ENCODE measurements at regions of chr20 and their contacts with region 1.

Region 1: DNA sequence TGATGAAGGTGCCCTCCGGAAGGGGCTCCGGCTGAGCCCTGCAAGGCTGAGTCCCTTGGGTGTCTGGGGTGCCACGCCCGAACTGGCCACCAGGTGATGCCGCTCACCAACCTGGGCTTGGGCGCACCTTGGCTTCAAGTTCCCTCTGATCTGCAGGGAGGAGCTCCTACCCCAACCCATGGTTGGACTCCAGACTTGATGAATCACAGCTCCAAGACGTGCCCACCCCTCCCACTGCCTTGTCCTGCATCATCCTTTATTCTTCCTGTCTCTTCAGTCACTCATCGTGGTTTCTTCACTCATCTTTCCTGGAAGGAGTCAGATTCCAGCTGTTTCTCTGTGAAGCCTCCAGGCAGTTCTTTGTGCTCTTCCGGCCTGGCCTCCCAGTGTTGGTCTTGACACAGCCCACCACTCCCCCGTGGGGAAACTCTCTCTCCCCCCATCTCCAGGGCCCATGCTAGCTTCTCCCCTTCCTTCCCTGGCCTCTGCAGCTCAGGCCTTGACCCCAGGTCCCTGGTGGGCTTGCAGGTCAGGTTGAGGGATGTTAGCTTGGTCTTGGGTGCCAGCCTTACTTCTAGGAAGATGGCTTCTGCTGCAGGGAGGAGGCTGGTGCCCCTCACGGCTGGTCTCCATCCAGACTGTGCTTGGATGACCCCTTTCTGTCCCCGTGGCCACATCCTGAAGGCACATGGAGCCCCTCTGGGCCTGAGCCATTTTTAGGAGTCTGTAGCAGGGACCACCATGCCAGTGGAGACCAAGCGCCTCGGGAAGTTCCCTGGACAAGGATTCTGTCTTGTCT is 2.6 kb upstream of the ZBP1 start:
- DNase-seq: peak; percentile 75
- H3K4me3 Mint-ChIP-seq: no peak overlapping the region
- H3K27ac Mint-ChIP-seq: no peak overlapping the region
- H3K4me1 Mint-ChIP-seq: peaks cover 6% of the 10 kb centered on the region
- H3K27me3 Mint-ChIP-seq: no peaks in the 10 kb centered on the region
- CTCF ChIP-seq: peak; percentile 84

Region 2: DNA sequence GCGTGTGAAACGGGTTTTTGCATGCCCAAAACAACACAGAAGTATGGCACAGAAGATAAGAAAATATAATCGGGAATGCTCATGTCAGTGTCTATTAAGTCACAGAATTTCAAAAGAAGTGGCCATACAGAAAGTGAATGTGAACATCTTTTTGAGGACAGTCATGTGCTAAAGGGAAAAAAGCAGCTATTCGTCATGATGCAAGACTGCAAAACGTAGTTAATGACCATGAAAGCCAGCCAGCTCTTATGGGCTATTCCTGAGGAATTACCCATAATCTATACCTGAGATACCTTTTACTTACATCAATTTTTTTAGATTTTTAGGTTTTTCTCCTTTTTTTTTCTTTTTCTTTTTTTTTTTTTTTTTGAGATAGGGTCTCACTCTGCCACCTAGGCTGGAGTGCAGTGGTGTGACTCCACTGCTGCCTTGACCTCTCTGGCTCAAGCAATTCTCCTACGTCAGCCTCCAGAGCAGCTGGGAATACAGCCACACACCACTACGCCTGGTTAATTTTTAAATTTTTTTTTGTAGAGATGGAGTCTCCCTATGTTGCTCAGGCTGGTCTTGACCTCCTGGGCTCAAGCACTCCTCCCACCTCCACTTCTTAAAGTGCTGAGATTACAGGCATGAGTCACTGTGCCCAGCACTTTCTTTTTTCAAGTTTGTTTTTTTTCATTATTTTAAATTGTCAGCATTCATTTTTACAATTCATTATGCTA is 15.6 kb after region 1 on chr20:
- CTCF ChIA-PET with region 1: interaction called, 14 read pairs
- POLR2A ChIA-PET with region 1: no interaction called
- intact Hi-C with region 1: no loop called
- DNase-seq: no peak
- H3K4me3 Mint-ChIP-seq: no peak overlapping the region
- H3K27ac Mint-ChIP-seq: no peak overlapping the region
- H3K4me1 Mint-ChIP-seq: no peaks in the 10 kb centered on the region
- H3K27me3 Mint-ChIP-seq: peaks cover 90% of the 10 kb centered on the region
- CTCF ChIP-seq: no peak

Region 3: GRCh38 chr20:57709931-57710799 is 87.4 kb after region 1 on chr20 and contains the start of gene PMEPA1:
- CTCF ChIA-PET with region 1: interaction called, 6 read pairs
- POLR2A ChIA-PET with region 1: no interaction called
- intact Hi-C with region 1: loop called (anchors 1 kb)
- DNase-seq: peak; percentile 93
- H3K4me3 Mint-ChIP-seq: peak within 1 kb of the TSS; percentile 100
- H3K27ac Mint-ChIP-seq: peak within 1 kb of the TSS; percentile 96
- H3K4me1 Mint-ChIP-seq: peaks cover 47% of the 10 kb centered on the region
- H3K27me3 Mint-ChIP-seq: no peaks in the 10 kb centered on the region
- CTCF ChIP-seq: no peak
- total RNA-seq, gene PMEPA1: 60.6 and 68.5 TPM in 2 replicates

Region 4: GRCh38 chr20:58179432-58180099 is 556.8 kb after region 1 on chr20:
- CTCF ChIA-PET with region 1: interaction called, 44 read pairs
- POLR2A ChIA-PET with region 1: no interaction called
- intact Hi-C with region 1: loop called (anchors 2 kb)
- DNase-seq: peak; percentile 40
- H3K4me3 Mint-ChIP-seq: no peak overlapping the region
- H3K27ac Mint-ChIP-seq: no peak overlapping the region
- H3K4me1 Mint-ChIP-seq: no peaks in the 10 kb centered on the region
- H3K27me3 Mint-ChIP-seq: peaks cover 32% of the 10 kb centered on the region
- CTCF ChIP-seq: peak; percentile 99

Region 5: GRCh38 chr20:58202044-58202443 is 579.3 kb after region 1 on chr20:
- CTCF ChIA-PET with region 1: interaction called, 83 read pairs
- POLR2A ChIA-PET with region 1: no interaction called
- intact Hi-C with region 1: no loop called
- DNase-seq: no peak
- H3K4me3 Mint-ChIP-seq: no peak overlapping the region
- H3K27ac Mint-ChIP-seq: no peak overlapping the region
- H3K4me1 Mint-ChIP-seq: no peaks in the 10 kb centered on the region
- H3K27me3 Mint-ChIP-seq: peaks cover 56% of the 10 kb centered on the region
- CTCF ChIP-seq: no peak

Region 6: DNA sequence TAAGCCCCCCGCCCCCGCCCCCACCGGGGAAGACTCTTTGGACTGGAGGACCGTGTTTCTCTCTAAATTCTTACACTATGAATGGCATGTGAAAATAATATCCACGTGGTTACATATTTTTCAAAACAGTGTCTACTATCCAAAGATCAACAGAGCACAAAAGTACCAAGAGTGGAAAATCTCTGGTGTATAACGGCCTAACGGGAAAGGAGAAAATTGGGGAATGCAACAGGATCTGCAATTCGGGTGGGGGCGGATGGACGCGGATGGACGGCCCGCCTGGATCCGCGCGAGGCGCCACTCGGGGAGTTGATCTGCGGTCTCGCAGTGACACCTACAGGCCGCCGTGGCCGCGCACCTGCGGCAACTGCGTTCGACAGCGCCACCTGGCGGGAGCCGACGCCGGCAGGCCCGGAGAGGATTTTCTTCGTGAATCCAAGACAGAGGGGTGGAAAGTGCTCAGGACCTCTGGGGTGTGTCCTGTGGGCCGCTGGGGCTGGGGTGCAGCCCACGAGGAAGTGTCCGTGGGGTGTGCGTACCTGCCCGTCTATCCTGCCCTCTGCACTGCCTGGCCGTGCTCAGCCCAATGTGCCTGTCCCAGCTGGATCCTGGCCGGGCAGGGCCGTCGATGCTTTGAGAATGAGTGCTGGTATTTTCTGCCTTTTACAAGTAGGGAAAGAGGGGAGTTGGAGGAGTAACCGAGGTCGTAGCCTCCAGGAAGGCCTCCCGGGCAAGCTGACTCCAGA is 587.0 kb after region 1 on chr20:
- CTCF ChIA-PET with region 1: interaction called, 83 read pairs
- POLR2A ChIA-PET with region 1: no interaction called
- intact Hi-C with region 1: loop called (anchors 1 kb)
- DNase-seq: peak; percentile 65
- H3K4me3 Mint-ChIP-seq: no peak overlapping the region
- H3K27ac Mint-ChIP-seq: peak overlapping the region; percentile 76
- H3K4me1 Mint-ChIP-seq: no peaks in the 10 kb centered on the region
- H3K27me3 Mint-ChIP-seq: peaks cover 51% of the 10 kb centered on the region
- CTCF ChIP-seq: peak; percentile 100